ENCODE measurements at regions of chr19 and their contacts with region 1.

Region 1: DNA sequence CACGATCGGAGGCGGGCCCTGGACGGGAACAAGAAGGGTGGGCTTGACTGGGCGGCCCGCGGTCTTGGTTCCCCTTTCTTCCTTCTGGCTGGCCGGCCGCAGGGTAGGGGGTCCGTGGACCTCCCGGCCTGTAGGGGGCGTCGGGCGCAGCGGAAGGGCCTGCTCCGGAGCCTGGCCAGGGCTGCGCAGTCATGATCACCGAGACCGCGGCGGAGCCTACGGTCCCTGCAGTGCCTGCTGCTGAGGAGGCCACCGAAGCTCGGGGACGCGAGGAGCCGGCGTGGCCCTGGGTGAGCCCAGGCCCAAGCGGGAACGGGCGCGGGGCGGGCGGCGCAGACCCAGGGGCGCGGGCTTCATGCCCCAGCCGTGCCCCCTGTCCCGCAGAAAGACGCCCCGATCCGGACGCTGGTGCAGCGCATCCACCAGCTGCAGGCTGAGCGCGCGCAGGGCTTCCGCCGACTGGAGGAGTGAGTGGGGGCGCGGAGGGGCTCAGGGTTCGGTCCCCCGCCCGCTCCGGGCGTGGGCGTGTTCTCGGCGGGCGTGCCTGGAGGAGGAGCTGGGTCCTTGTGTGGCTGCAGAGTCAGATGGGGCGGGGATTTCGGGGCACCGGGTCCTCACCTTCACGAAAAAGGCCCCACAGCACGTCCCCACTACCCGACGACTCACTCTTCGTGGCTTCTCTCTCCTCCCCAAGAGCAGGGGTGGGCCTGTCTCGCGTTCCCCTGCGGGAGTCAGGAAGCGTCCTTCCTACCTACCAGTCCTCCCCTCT is at the start of gene REX1BD:
- DNase-seq: peak; percentile 88
- H3K4me3 Mint-ChIP-seq: peak within 1 kb of the TSS; percentile 82
- H3K27ac Mint-ChIP-seq: peak within 1 kb of the TSS; percentile 81
- H3K4me1 Mint-ChIP-seq: peaks cover 34% of the 10 kb centered on the region
- H3K27me3 Mint-ChIP-seq: no peaks in the 10 kb centered on the region
- total RNA-seq, gene REX1BD: 97.6 to 99.3 TPM

Region 2: DNA sequence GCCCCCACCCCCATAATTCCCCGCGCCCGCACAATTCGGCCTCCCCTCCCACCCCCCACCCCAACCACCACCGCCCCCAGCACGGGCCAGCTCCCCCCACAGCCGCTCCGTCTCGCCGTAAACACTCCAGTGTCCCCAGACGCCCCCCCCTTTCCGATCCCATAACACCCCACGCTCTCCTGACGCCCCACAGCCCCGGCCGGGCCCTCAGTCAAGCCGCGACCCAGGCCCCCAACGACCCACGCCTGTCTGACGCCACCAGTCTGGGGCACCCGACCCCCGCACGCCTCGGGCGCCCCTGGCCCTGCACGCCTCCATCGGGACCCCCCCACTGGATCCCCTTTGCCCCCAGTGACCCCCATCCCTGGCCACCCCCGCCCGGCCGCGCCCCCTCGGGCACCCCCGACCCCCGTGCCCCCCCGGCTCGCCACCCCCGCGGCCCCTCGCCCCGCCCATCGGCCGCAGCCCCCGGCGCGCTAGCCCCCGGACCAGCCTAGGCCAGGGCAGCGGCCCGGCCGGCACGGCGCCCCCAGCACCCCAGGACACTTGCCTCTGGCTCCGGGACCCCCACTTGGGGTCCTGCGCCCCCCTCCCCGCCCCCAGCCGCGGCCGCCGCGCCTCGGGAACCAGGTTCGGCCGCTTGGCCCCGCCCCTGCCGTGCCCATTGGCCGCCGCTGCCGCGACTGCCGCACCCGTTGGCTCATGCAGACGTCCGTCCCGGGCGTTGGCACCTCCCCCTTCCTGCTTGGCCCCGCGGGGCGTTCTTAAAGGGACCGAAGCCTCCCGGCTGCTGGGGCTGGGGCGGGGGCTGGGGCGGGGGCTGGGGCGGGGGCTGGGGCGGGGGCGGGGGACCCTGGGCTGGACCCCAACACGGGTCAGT is 45.6 kb before region 1 on chr19 and contains the start of gene FKBP8:
- CTCF ChIA-PET with region 1: interaction called, 6 read pairs
- POLR2A ChIA-PET with region 1: interaction called, 5 read pairs
- intact Hi-C with region 1: loop called (anchors 5 kb)
- DNase-seq: peak; percentile 97
- H3K4me3 Mint-ChIP-seq: peak within 1 kb of the TSS; percentile 89
- H3K27ac Mint-ChIP-seq: peak within 1 kb of the TSS; percentile 98
- H3K4me1 Mint-ChIP-seq: peaks cover 23% of the 10 kb centered on the region
- H3K27me3 Mint-ChIP-seq: no peaks in the 10 kb centered on the region
- total RNA-seq, gene FKBP8: 232 to 236 TPM

Region 3: DNA sequence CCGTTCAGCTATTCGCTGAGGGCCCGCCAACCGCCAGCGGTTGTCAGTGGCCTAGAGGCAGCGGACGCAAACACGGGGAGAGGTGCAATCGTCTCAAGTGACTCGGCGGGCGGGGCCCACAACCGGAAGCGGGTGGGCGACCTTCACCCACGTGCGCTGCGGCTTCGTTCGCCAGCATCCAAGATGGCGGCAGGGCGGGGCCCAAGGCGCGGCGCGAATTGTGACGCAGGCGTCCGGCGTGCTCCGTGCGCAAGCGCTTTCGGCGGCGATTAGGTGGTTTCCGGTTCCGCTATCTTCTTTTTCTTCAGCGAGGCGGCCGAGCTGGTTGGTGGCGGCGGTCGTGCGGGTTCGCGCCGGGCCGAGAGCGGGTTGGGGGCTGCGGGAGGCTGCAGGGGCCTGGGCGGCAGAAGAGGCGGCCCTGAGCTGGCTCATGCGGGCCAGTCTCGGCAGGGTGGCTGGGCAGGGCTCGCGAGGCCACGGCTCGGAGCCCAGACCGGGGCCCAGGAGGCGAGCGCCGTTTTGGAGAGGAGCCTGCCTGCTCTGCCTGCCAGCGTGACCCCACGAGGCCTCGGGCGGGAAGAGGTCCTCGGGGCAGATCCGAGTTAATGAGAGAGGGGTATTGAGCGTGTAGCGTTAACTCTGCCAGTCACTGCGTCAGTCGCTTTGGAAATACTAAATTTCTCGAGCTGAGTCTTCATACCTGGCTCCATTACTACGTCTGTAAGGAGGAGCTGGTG is 17.1 kb before region 1 on chr19 and contains the start of gene UBA52:
- CTCF ChIA-PET with region 1: interaction called, 46 read pairs
- POLR2A ChIA-PET with region 1: interaction called, 28 read pairs
- intact Hi-C with region 1: loop called (anchors 2 kb)
- DNase-seq: peak; percentile 99
- H3K4me3 Mint-ChIP-seq: peak within 1 kb of the TSS; percentile 91
- H3K27ac Mint-ChIP-seq: peak within 1 kb of the TSS; percentile 92
- H3K4me1 Mint-ChIP-seq: peaks cover 23% of the 10 kb centered on the region
- H3K27me3 Mint-ChIP-seq: no peaks in the 10 kb centered on the region
- total RNA-seq, gene UBA52: 1,569 to 1,601 TPM

Region 4: DNA sequence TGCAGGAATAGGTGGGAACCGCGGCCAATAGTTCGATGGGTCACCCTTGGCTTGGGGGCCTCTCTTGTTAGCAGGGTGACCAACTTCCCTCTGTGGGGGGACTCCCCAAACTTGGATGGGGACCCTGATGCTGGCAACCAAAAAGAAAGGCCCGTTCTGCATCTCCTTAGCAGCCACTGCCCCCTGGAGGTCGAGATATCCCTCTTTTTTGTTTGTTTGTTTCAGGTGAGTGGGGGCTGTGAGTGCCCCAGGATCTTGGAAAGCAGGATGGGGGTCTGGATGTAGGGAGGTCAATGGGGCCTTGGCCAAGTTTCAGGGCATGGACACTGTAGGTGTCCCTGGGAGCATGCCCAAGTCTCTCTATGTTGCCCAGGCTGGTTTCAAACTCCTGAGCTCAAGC is 87.0 kb after region 1 on chr19:
- CTCF ChIA-PET with region 1: no interaction called
- POLR2A ChIA-PET with region 1: no interaction called
- intact Hi-C with region 1: loop called (anchors 5 kb)
- DNase-seq: peak; percentile 40
- H3K4me3 Mint-ChIP-seq: no peak overlapping the region
- H3K27ac Mint-ChIP-seq: no peak overlapping the region
- H3K4me1 Mint-ChIP-seq: no peaks in the 10 kb centered on the region
- H3K27me3 Mint-ChIP-seq: peaks cover 2% of the 10 kb centered on the region

Region 5: DNA sequence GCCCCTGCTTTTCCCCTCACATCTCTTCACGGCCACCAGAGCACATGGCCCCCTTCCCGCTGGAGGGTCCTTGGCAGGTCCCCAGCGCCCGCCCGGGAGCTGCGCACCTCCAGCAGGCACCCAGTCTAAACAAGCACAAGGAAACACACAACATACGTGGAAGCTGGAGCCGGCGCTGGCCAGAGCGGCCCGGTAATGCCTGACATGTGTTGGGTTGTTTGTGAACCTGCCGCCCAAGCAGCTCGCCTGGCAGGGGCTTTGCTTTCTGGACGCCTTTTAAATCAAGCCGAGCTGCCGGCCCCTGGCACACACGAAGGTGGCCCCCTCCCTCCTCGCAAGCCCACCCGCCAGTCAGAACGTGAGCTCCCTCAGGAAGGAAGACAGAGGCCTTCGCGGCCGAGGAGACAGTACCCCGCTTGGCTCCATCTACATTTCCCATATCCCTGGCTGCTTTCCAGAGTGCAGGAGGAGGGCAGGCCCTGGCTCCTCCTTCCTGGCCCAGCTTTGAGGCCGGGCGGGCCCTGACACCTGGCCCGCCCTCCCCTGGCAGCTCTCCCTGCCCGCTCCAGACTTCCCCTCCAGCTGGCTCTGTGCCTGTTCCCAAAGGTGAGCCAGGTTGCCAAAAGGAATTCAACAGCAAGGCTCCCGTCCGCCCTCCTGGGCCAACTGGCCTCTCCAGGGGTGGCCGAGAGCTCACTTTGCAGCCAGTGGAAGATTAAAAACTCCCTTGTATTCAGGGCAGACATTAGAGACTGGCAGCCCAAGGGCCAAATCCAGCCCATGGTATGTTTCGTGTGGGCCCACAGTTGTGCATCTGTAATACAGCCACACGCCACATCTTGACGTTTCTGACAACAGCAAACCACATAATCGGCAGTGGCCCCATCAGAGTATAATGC is 173.6 kb after region 1 on chr19:
- CTCF ChIA-PET with region 1: no interaction called
- POLR2A ChIA-PET with region 1: no interaction called
- intact Hi-C with region 1: no loop called
- DNase-seq: no peak
- H3K4me3 Mint-ChIP-seq: no peak overlapping the region
- H3K27ac Mint-ChIP-seq: no peak overlapping the region
- H3K4me1 Mint-ChIP-seq: no peaks in the 10 kb centered on the region
- H3K27me3 Mint-ChIP-seq: no peaks in the 10 kb centered on the region

Region 6: DNA sequence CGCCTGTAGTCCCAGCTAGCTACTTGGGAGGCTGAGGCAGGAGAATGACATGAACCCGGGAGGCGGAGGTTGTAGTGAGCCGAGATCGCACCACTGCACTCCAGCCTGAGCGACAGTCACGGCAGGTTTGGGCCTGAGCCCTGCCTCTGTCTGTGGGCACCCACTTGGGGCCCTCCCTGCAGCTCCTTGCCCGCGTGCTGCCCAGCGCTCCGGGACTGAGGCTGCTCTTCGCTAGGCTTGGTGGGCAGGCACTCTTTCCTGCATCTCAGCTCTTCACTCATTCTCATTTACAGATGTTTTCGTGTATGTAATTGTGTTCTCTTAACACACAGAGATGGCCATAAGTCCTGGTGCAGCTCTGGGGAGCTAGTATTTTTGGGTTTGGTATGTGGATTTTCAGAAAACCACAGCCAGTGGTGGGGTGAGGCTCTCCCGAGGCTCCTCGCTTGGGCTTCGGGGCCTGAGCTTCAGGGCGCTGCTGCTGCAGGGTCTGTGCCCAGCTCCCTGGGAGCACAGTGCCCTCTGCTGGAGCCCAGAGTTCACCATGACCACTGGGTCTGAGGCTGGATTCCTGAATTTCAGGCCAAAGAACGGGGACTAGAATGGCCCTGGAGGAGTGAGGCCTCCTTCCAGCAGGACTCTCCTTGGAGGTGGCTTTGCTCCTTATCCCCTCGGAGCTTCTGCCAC is 258.2 kb after region 1 on chr19:
- CTCF ChIA-PET with region 1: interaction called, 19 read pairs
- POLR2A ChIA-PET with region 1: interaction called, 6 read pairs
- intact Hi-C with region 1: loop called (anchors 2 kb)
- DNase-seq: peak; percentile 79
- H3K4me3 Mint-ChIP-seq: no peak overlapping the region
- H3K27ac Mint-ChIP-seq: peak overlapping the region; percentile 24
- H3K4me1 Mint-ChIP-seq: peaks cover 70% of the 10 kb centered on the region
- H3K27me3 Mint-ChIP-seq: no peaks in the 10 kb centered on the region

Measured in activated CD4-positive, alpha-beta memory T cell treated with anti-CD3 and anti-CD28 coated beads for 36 hours (primary cell).